ENCODE measurements at regions of chr6 and their contacts with region 1.

Region 1: DNA sequence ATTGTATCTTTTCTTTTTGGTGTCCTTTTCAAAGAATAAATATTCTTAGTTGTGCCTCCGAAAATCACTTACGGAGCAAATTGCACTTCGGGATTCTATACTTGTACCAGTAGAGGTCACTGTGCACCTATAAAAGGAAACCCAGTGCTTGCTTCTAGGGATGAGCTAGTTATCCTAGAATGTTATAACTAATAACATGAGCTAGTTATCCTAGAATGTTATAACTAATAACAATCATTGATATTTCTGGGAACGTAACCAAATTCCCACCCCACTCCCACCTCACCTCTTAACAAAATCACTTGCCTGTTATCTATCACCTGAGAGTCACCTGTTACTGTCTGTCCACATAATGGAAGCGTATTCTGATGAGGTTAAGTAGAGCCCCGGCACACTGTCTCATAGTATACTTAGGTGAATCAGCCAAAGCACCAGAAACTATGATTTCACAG is 126.9 kb upstream of the TIAM2 start:
- DNase-seq: peak; percentile 15
- H3K4me3 ChIP-seq: no peak overlapping the region
- H3K27ac ChIP-seq: no peak overlapping the region
- H3K4me1 ChIP-seq: peaks cover 2% of the 10 kb centered on the region
- H3K27me3 ChIP-seq: no peaks in the 10 kb centered on the region
- CTCF ChIP-seq: peak in 3 of 4 experiments; percentile 55 to 75 (median 67)
- POLR2A ChIP-seq: no peak

Region 2: GRCh38 chr6:154928325-154928922 is 60.3 kb after region 1 on chr6:
- intact Hi-C with region 1: loop called (anchors 5 kb)
- DNase-seq: peak; percentile 52
- H3K4me3 ChIP-seq: no peak overlapping the region
- H3K27ac ChIP-seq: no peak overlapping the region
- H3K4me1 ChIP-seq: no peaks in the 10 kb centered on the region
- H3K27me3 ChIP-seq: no peaks in the 10 kb centered on the region
- CTCF ChIP-seq: peak; percentile 28 to 77 (median 69)
- POLR2A ChIP-seq: no peak

Region 3: DNA sequence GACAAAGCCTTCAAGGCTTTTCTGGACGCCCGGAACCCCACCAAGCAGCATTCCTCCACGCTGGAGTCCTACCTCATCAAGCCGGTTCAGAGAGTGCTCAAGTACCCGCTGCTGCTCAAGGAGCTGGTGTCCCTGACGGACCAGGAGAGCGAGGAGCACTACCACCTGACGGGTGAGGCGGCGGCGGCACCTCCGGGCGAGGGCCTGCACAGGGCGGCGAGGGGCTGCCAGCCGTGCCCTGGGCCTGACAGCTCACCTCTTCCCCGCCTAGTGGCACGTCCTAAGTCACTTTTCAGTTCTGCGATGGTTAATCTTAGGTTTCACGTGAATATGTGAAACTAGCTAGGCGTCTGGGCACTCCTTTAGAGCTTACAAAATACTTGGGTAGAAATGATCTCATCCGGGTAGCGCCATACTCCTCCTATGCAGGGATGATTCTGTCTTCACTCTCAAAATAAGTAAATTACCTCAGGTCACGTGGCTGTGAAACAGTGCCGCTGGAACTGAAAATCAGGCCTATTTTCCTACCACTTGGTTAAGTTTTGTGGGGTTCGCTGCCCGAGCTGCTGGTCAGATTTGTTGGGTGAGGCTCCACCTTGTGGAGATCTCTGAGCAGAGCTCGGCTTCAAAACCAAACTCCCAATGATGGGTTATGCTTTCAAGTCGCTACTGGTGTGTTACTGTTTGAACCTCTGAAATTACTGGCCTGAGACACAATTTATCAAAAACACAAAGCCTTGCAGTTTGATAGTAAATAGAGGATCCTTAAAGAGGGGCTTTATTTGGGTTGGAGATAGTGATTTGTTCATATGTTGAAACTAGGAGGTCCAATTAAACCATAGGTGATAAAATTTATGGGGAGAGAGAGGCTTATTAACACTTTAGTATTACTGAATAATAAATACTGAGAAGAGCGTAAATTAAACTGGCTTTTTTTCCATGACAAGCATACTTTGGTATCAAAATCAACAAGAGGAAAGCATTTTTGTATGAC is 380.1 kb after region 1 on chr6:
- intact Hi-C with region 1: loop called (anchors 10 kb)
- DNase-seq: peak; percentile 59
- H3K4me3 ChIP-seq: no peak overlapping the region
- H3K27ac ChIP-seq: peak overlapping the region; percentile 6 to 8
- H3K4me1 ChIP-seq: no peaks in the 10 kb centered on the region
- H3K27me3 ChIP-seq: no peaks in the 10 kb centered on the region
- CTCF ChIP-seq: peak; percentile 48 to 80 (median 76)
- POLR2A ChIP-seq: no peak